Ovary (tissue), 10 donors: ENCODE measurements at regions of chr16 and their contacts with region 1.

Region 1: GRCh38 chr16:78742501-78743283 is 643.2 kb downstream of the WWOX start:
- DNase-seq: peak in 1 of 5 donors; percentile 31
- H3K4me3 ChIP-seq: no peak overlapping the region
- H3K27ac ChIP-seq: no peak overlapping the region
- H3K4me1 ChIP-seq: peaks cover 9% of the 10 kb centered on the region
- H3K27me3 ChIP-seq: no peaks in the 10 kb centered on the region
- CTCF ChIP-seq: no peak
- EP300 ChIP-seq: no peak
- POLR2A ChIP-seq: no peak

Region 2: DNA sequence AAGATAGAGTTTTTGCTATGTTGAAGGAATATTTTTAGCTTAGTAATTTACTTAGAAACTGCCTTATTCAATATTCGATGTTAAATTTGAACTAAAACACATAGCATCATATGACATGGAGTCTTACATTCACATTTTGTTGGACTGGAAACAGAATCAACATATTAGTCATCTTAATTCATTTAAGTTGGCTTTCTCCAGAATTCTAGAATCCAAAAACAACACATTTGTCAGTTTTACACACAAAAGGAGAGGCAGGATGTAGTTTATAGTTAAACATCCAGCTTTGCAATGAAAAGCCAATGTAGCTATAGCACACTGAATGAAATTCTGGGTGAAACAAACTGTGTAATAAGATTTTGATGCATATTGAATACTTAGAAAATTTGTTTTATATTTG is 599.9 kb before region 1 on chr16:
- intact Hi-C with region 1: loop called in 1 of 4 experiments (anchors 10 kb)
- DNase-seq: no peak
- H3K4me3 ChIP-seq: no peak overlapping the region
- H3K27ac ChIP-seq: no peak overlapping the region
- H3K4me1 ChIP-seq: peaks cover 2% of the 10 kb centered on the region
- H3K27me3 ChIP-seq: no peaks in the 10 kb centered on the region
- CTCF ChIP-seq: no peak
- EP300 ChIP-seq: no peak
- POLR2A ChIP-seq: no peak

Region 3: DNA sequence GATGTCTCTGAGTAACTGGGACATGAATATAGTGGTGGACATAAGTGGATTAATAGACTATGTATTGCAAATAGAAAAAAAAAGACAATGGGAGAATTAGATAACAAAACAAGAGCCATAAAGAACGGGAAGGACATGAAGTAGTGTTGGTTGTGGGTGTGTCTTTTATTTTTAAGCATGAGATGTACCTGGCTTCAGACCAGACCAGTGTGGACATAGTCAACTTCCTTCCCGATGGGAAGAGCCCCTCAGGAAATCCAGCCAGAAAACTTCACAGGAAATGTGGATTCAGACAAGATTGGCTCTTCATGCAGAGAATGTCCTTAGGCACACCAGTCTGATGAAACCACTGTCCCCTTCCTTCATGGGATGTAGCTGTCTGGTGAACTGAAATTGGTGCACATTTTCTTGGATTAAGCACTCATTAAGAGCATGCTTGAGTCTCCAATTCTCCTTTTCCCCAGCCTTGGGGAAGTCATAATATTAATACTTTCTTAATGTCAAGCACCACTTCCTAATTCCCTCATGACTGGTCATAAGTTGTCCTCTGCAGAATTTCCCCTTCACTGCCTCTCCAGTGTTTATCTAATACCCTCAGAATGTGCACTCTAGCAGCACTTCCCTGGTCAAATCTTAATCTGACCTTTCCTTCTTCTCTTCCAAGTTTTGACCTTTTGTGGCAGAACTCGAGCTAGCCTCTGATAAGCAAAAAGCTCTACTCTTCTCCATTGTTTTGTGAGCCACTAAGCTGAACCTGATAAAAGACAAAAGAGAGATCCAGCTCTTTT is 1208.4 kb after region 1 on chr16:
- intact Hi-C with region 1: no loop called
- DNase-seq: no peak
- H3K4me3 ChIP-seq: no peak overlapping the region
- H3K27ac ChIP-seq: no peak overlapping the region
- H3K4me1 ChIP-seq: no peaks in the 10 kb centered on the region
- H3K27me3 ChIP-seq: no peaks in the 10 kb centered on the region
- CTCF ChIP-seq: no peak
- EP300 ChIP-seq: no peak
- POLR2A ChIP-seq: no peak